Activated naive CD4-positive, alpha-beta T cell treated with anti-CD3 and anti-CD28 coated beads, Interleukin-2, amount 10 ng/mL, durations not matched to agents 7 days and 5 days (primary cell): ENCODE measurements at regions of chr12 and their contacts with region 1.

Region 1: GRCh38 chr12:6867413-6868210 is at the start of gene TPI1:
- DNase-seq: peak; percentile 86
- H3K4me3 Mint-ChIP-seq: peak within 1 kb of the TSS; percentile 97
- H3K27ac Mint-ChIP-seq: peak within 1 kb of the TSS; percentile 95
- H3K4me1 Mint-ChIP-seq: peaks cover 55% of the 10 kb centered on the region
- H3K27me3 Mint-ChIP-seq: no peaks in the 10 kb centered on the region

Region 2: DNA sequence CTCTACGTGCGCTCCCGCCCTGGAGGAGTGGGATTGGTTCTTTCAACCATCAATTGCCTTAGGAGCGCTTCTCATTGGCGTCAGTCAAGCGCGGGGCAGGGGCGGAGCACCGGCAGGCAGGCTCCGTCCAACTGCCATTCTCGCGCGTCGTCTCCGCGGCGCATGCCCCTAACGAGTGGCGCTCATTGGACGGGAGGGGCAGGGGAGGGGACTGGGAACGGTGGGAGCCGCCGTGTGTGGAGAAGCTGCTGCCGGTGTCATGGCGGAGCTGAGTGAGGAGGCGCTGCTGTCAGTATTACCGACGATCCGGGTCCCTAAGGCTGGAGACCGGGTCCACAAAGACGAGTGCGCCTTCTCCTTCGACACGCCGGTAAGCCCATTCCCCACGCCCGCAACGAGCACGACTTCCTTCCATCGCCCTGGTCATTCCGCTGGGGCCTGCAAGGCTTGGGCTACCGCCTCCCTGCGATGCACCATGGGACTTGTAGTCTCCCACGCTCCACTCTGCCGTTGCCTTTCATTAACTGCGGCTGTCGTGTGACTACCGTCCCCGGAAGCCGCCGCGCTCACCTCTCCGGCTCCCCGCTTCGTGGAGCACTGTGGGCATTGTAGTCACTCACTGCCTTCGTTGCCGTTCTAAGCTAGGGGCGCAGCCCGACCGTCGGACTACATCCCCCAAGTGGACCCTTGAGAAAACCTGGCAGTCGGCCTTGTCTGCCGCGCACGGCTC is 15.5 kb before region 1 on chr12 and contains the start of gene USP5:
- CTCF ChIA-PET with region 1: interaction called, 29 read pairs
- DNase-seq: peak; percentile 99
- H3K4me3 Mint-ChIP-seq: peak within 1 kb of the TSS; percentile 84
- H3K27ac Mint-ChIP-seq: peak within 1 kb of the TSS; percentile 100
- H3K4me1 Mint-ChIP-seq: peaks cover 55% of the 10 kb centered on the region
- H3K27me3 Mint-ChIP-seq: no peaks in the 10 kb centered on the region

Region 3: GRCh38 chr12:6890789-6891645 is 23.4 kb after region 1 on chr12:
- CTCF ChIA-PET with region 1: interaction called, 35 read pairs
- DNase-seq: peak; percentile 99
- H3K4me3 Mint-ChIP-seq: peak overlapping the region; percentile 76
- H3K27ac Mint-ChIP-seq: peak overlapping the region; percentile 94
- H3K4me1 Mint-ChIP-seq: peaks cover 29% of the 10 kb centered on the region
- H3K27me3 Mint-ChIP-seq: no peaks in the 10 kb centered on the region

Region 4: DNA sequence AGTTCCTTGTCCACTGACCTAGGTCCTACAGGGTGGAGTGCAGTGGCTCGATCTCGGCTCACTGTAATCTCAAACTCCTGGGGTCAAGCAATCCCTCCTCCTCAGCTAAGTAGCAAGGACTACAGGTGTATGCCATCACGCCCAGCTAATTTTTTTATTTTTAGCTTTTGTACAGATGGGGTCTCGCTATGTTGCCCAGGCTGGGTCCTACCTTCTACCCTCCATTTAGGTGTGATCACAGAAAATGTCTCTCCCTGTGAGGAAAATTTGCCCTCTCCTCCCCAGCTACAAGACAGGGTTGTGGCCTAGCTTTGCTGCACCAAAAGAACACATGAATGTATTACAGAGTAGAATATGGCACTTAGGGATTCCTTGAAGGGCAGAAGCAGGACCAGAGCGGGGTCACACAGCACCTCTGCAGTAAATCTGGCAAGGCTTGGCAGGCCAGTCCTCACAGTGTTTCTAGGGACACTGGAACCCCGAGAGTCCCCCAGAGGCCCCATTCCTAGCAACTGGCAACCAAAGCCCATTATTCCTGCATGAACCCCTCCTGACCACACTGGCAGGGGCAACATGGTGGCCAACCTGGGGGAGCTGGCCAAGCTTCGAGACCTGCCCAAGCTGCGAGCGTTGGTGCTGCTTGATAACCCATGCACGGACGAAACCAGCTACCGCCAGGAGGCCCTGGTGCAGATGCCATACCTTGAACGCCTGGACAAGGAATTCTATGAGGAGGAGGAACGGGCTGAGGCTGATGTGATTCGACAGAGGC is 44.7 kb after region 1 on chr12:
- CTCF ChIA-PET with region 1: interaction called, 12 read pairs
- DNase-seq: no peak
- H3K4me3 Mint-ChIP-seq: peak overlapping the region; percentile 66
- H3K27ac Mint-ChIP-seq: peak overlapping the region; percentile 35
- H3K4me1 Mint-ChIP-seq: peaks cover 42% of the 10 kb centered on the region
- H3K27me3 Mint-ChIP-seq: peaks cover 12% of the 10 kb centered on the region

Region 5: DNA sequence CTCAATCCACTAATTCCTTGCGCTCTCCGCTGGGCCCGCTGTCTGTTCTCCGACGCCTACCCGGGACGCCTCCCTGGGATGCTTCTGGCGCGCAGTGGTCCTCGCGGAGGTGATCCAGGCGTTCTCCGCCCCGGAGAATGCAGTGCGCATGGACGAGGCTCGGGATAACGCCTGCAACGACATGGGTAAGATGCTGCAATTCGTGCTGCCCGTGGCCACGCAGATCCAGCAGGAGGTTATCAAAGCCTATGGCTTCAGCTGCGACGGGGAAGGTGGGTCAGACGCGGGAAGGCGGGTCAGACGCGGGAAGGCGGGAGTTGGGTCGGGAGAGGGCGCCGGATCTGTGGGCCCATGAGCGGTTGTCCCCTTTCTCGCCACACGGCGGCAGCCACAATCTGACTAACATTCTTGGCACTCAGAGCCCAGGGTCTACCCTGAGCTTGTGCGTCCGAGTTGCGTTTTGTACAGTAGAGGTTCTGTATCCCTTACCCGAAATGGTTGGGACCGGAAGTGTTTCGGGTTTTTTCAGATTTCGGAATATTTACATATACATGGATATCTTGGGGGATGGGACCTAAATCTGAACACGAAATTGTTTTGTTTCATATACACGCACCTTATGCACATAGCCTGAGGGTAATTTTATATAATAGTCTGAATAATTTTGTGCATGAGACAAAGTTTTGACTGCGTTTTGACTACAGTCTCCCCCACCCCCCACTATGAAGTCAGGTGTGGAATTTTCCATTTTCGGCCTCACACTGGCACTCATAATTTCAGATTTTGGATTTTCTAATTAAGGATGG is 77.0 kb after region 1 on chr12:
- CTCF ChIA-PET with region 1: interaction called, 11 read pairs
- DNase-seq: peak; percentile 93
- H3K4me3 Mint-ChIP-seq: peak overlapping the region; percentile 84
- H3K27ac Mint-ChIP-seq: peak overlapping the region; percentile 96
- H3K4me1 Mint-ChIP-seq: peaks cover 67% of the 10 kb centered on the region
- H3K27me3 Mint-ChIP-seq: no peaks in the 10 kb centered on the region